Sigmoid colon (tissue), 7 donors: ENCODE measurements at regions of chr6 and their contacts with region 1.

Region 1: GRCh38 chr6:121521892-121522664 is 86.6 kb downstream of the GJA1 start:
- DNase-seq: no peak
- H3K4me3 ChIP-seq: peak overlapping the region in 1 of 4 donors; percentile 5
- H3K27ac ChIP-seq: peak overlapping the region; percentile 46 to 87 (median 57)
- H3K4me1 ChIP-seq: peaks cover 0 to 46% (median 39%) of the 10 kb centered on the region in 4 donors
- H3K27me3 ChIP-seq: no peaks in the 10 kb centered on the region
- CTCF ChIP-seq: no peak
- EP300 ChIP-seq: no peak
- POLR2A ChIP-seq: no peak

Region 2: GRCh38 chr6:121443971-121444541 is 78.0 kb before region 1 on chr6:
- intact Hi-C with region 1: loop called (anchors 5 kb)
- DNase-seq: no peak
- H3K4me3 ChIP-seq: no peak overlapping the region
- H3K27ac ChIP-seq: peak overlapping the region in 1 of 4 donors; percentile 30
- H3K4me1 ChIP-seq: no peaks in the 10 kb centered on the region
- H3K27me3 ChIP-seq: peaks cover 0 to 5% (median 0%) of the 10 kb centered on the region in 3 donors
- CTCF ChIP-seq: no peak
- EP300 ChIP-seq: no peak
- POLR2A ChIP-seq: no peak

Region 3: DNA sequence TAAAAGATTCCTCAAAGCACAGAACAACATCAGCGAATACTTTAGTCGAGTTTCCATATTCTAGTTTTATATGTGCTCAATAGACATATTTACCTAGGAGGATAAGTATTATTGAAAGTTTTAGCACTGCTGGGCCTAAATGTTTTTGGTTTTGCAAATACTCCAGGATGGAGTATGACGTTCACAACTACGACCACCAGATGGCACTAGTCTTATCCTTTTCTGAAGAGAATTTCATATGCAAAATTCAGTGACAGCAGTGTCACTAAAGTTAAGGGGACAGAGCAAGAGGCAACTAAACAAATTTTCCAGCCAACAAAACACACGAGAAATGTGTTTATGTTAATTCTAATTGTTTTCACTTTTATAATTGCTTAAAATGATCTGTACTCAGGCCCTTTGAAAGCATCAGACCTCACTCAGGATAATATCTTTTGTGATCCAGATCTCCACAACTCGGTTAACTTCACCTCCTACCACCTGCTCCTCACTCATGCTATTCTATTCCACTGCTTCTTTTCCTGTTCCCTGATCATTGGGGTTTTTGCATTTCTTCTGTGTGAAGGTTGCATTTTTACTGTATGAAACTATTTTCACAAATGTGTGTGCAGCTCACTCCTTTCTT is 1893.9 kb after region 1 on chr6:
- intact Hi-C with region 1: no loop called
- DNase-seq: no peak
- H3K4me3 ChIP-seq: no peak overlapping the region
- H3K27ac ChIP-seq: no peak overlapping the region
- H3K4me1 ChIP-seq: no peaks in the 10 kb centered on the region
- H3K27me3 ChIP-seq: no peaks in the 10 kb centered on the region
- CTCF ChIP-seq: peak in 3 of 4 experiments; percentile 34 to 72 (median 48)
- EP300 ChIP-seq: no peak
- POLR2A ChIP-seq: no peak